ENCODE measurements at regions of chr10 and their contacts with region 1.

Region 1: DNA sequence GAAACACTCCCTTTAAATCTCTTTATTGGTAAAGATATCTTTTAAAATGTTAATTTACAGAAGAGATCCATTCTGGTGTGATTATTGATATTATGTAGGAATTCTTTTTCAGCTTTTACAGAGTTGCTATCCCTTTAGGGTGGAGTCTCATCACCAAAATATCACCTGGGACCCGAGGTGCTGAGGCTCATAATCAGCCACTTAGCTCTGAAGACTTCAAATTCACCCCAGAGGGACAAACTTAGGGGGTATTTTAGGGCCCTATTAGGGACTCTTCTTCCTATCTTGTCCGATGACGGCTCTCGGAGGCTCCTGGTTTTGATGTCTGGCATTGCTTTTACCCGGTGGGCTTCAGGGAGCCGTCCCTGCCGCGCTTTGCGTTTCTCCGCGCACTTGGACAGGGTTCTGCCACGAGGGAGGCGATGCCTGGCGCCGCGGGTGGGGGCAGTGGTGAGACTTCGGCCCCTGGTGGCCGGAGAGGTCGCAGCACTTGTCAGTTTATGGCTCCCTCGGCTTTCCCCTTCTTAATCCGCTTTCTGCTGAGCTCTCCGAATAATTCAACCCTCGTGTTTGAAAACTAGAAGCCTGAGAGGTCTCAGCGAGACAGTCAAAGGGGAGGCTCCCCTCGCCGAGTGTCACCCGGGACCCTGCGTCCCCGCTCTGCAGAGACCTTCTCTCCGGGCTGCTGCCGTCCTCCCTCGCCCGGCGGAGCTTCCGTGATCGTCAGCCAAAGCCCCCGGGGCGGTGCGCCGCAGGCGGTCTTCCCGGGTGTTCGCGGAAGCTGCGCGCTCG is 27.8 kb downstream of the RBM20 start:
- DNase-seq: peak; percentile 75
- H3K4me3 Mint-ChIP-seq: peak overlapping the region; percentile 77
- H3K27ac Mint-ChIP-seq: no peak overlapping the region
- H3K4me1 Mint-ChIP-seq: peaks cover 5% of the 10 kb centered on the region
- H3K27me3 Mint-ChIP-seq: peaks cover 57% of the 10 kb centered on the region

Region 2: DNA sequence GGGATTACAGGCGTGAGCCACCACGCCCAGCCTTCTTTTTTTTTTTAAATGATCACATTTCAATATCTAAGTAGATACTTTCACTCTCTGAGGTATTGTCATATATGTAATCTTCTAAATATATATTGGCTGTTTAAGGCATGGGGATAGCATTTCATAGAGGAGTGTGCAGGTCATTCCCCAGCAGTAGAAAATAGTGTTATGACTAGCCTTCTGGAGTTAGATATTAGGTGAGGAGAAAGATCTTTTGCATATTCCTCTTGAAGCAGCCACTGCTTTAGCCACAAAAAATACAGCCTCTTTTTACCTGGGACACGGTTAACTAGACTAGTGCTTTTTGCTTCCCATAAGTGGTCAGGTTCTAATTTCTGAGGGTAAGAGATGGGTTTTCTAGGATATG is 635.3 kb before region 1 on chr10:
- CTCF ChIA-PET with region 1: no interaction called
- DNase-seq: no peak
- H3K4me3 Mint-ChIP-seq: no peak overlapping the region
- H3K27ac Mint-ChIP-seq: no peak overlapping the region
- H3K4me1 Mint-ChIP-seq: peaks cover 63% of the 10 kb centered on the region
- H3K27me3 Mint-ChIP-seq: no peaks in the 10 kb centered on the region

Region 3: GRCh38 chr10:110535958-110536891 is 135.8 kb before region 1 on chr10:
- CTCF ChIA-PET with region 1: no interaction called
- DNase-seq: peak; percentile 68
- H3K4me3 Mint-ChIP-seq: no peak overlapping the region
- H3K27ac Mint-ChIP-seq: peak overlapping the region; percentile 53
- H3K4me1 Mint-ChIP-seq: peaks cover 45% of the 10 kb centered on the region
- H3K27me3 Mint-ChIP-seq: peaks cover 33% of the 10 kb centered on the region

Region 4: DNA sequence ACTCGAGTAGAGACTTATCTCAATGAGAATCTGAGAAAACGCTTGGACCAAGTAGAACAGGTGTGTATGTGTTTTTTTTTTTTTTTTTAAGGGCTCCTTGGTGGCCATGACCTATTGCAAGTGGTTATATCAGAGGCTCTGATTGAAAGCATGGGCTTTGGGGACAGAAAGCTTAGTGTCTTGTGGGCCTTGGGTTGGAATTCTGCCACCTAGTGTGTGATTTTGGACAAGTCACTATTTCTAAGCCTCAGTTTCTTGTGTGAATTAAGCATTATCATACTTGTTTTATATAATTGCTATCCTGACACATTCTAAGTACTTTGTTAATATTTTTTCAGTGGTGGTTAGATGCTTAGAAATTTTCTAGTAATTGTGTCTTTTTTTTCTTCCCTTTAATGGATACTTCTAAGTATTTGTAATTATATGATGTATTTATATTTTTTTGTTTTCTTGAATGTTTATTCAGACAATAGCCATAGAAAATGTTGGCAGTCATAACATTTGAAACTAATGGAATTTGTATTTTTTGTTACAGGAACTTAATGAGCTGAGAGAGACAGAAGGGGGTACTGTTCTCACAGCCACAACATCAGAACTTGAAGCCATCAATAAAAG is 71.4 kb before region 1 on chr10:
- CTCF ChIA-PET with region 1: interaction called, 12 read pairs
- DNase-seq: peak; percentile 50
- H3K4me3 Mint-ChIP-seq: no peak overlapping the region
- H3K27ac Mint-ChIP-seq: no peak overlapping the region
- H3K4me1 Mint-ChIP-seq: no peaks in the 10 kb centered on the region
- H3K27me3 Mint-ChIP-seq: no peaks in the 10 kb centered on the region

Region 5: GRCh38 chr10:110610308-110610774 is 61.6 kb before region 1 on chr10:
- CTCF ChIA-PET with region 1: interaction called, 32 read pairs
- DNase-seq: peak; percentile 68
- H3K4me3 Mint-ChIP-seq: no peak overlapping the region
- H3K27ac Mint-ChIP-seq: no peak overlapping the region
- H3K4me1 Mint-ChIP-seq: peaks cover 18% of the 10 kb centered on the region
- H3K27me3 Mint-ChIP-seq: peaks cover 1% of the 10 kb centered on the region

Region 6: DNA sequence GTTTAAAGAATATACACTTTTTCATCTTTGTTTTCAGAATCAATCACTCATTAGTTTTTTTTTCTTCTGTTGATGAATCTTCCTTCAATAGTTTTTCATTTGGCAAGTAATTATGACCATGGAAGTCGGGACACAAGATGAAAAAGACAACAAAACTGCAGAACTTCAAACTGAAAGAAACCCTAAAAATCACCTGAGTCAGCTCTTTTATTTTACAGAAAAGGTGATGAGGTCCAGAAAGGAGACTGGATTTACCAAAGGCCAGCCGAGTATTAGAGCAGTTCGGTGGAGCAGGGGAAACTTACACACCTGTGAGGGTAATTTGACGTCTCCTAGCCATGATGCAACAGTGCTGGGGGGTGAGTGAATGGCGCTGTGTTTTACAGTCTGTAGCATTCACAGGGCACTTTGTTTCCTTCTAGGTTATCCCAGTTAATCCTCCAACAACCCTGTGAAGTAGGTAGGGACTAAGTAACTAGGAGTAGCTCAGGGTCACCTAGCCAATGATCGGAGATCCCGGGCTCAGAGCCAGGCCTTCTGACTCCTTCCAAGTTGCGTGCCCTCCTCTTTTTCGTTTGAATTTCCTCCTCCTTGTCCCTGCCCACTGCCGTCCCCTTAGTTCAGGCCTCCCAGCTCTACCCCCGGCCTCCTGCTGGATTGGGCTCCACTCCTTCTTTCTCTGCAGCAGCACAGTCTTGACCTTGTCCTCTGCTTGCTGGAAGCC is 13.9 kb before region 1 on chr10:
- CTCF ChIA-PET with region 1: interaction called, 13 read pairs
- DNase-seq: no peak
- H3K4me3 Mint-ChIP-seq: no peak overlapping the region
- H3K27ac Mint-ChIP-seq: no peak overlapping the region
- H3K4me1 Mint-ChIP-seq: peaks cover 12% of the 10 kb centered on the region
- H3K27me3 Mint-ChIP-seq: peaks cover 25% of the 10 kb centered on the region

Measured in activated naive CD4-positive, alpha-beta T cell treated with anti-CD3 and anti-CD28 coated beads, Interleukin-2, amount 10 ng/mL, durations not matched to agents 7 days and 5 days (primary cell).